Lower leg skin (tissue), 4 donors: ENCODE measurements at regions of chr1 and their contacts with region 1.

Region 1: DNA sequence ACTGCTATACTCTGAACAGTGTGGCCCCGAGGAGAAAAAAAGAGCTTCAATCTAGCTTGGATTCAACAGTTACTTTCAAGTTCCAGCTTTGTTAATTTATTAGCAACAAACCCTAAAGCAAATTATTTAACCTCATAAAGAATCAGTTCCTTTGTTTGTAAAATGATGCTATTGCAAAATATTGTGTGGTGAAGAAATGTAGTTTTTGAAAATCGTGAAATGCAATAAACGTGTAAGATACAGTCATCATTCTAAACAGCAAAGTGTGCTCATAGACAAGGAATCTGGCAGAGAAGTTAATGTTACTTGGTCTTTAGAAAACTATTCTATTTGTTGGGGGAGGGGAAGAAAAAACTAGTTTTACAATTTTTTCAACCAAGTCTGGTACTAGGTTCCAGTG is 297.6 kb upstream of the ADGRL4 start:
- DNase-seq: no peak
- H3K4me3 ChIP-seq: no peak overlapping the region
- CTCF ChIP-seq: no peak
- POLR2A ChIP-seq: no peak

Region 2: GRCh38 chr1:79252598-79252997 is 51.5 kb before region 1 on chr1:
- intact Hi-C with region 1: no loop called
- DNase-seq: no peak
- H3K4me3 ChIP-seq: no peak overlapping the region
- CTCF ChIP-seq: no peak
- POLR2A ChIP-seq: no peak

Region 3: GRCh38 chr1:79271759-79272158 is 32.4 kb before region 1 on chr1:
- intact Hi-C with region 1: loop called (anchors 1 kb)
- DNase-seq: no peak
- H3K4me3 ChIP-seq: no peak overlapping the region
- CTCF ChIP-seq: no peak
- POLR2A ChIP-seq: no peak